Activated T-helper 2 cell treated with anti-CD3 and anti-CD28 coated beads, Interferon-gamma antibody, Interleukin-2, Interleukin-4, amounts not matched to agents 10 μg/mL and 5 μg/mL and 100 μg/mL, durations not matched to agents 14 hours and 24 hours and 36 hours (primary cell): ENCODE measurements at regions of chr19 and their contacts with region 1.

Region 1: DNA sequence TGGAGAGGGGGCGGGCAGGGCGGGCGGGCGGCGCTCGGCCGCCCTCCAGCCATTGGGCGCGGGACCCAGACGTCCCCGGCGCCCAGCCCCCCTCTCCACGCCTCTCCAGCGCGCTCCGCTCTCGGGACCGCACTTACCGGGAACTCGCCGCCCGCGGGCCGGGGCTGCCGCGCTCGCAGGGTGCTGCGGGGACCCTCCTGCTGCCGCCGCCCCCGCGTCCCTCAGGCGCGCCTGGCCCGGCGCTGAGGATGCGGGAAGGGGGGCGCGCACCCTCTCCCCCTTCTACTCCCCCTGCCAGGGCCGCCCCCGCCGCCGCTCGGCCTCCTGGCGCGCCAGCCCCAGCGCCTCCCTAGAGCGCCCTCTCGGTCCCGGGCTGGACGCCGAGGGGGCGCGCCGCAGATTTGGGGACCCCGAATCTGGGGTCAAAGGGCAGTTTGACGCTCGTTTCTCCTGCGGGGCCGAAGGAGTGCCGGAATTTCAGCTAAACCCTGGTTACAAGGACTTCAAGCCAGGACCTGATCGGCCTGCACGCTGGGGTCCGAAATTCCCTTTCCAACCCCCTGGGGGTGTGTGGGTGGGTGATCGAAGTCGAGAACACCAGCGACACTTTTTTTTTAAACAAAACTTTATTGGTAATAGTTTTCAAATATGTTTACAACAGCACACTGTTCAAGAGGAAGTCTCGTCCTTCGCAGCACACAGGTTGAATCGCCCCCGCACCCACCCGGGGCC is 696 bp upstream of the SAMD1 start:
- DNase-seq: peak; percentile 58
- H3K4me3 Mint-ChIP-seq: peak overlapping the region; percentile 99
- H3K27ac Mint-ChIP-seq: peak overlapping the region; percentile 99
- H3K4me1 Mint-ChIP-seq: peaks cover 11% of the 10 kb centered on the region
- H3K27me3 Mint-ChIP-seq: no peaks in the 10 kb centered on the region

Region 2: DNA sequence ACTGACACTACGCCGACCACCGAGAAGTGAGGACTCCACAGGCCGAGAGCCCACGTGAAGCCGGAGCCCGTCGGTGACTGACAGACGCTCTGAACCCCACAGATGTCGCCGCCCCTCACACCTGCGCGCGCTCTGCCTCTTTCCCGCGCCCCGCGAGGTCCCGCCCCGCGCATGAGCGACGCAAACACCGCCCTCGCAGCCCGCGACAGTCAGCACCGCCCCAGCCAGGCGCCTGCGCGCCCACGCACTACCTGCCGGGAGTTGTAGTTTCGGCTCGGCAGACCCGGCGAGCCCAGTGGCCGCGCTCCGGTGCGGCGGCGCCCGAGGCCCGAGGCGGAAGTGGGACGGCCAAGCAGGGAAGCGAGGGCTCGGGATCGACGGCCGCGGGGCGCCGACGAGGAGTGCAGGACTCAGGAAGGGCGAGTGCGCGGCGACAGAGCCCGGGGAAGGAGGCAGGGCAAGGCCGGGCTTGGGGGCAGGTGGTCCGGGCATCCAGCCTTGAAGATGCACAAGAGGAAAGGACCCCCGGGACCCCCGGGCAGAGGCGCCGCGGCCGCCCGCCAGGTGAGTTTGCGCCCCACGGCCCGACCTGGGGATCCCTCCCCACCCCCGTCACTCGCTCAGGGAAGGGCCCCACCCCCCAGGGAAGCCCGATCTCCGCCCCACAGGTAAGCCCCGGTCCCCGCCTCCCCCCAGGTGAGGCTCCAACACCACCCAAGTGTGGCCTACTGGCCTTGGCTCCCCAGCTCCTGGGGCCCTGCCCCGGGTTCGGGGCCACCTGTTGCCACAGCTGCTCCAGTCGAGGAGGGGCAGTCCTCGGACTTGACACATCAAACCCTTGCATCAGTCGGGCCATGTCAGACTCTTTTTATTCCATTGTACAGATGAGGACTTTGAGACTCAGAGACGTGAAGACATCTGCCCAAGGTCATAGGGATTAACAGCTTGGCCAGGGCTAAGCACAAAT is 185.0 kb before region 1 on chr19 and contains the starts of genes BRME1 and CC2D1A:
- intact Hi-C with region 1: no loop called
- DNase-seq: peak; percentile 93
- H3K4me3 Mint-ChIP-seq: peak within 1 kb of the TSS; percentile 82
- H3K27ac Mint-ChIP-seq: peak within 1 kb of the TSS; percentile 86
- H3K4me1 Mint-ChIP-seq: peaks cover 16% of the 10 kb centered on the region
- H3K27me3 Mint-ChIP-seq: no peaks in the 10 kb centered on the region
- total RNA-seq, gene BRME1: 14.9 and 15.3 TPM in 2 replicates
- total RNA-seq, gene CC2D1A: 36.9 and 41.5 TPM in 2 replicates

Region 3: GRCh38 chr19:14048443-14049153 is 42.6 kb before region 1 on chr19:
- intact Hi-C with region 1: no loop called
- DNase-seq: peak; percentile 53
- H3K4me3 Mint-ChIP-seq: no peak overlapping the region
- H3K27ac Mint-ChIP-seq: no peak overlapping the region
- H3K4me1 Mint-ChIP-seq: no peaks in the 10 kb centered on the region
- H3K27me3 Mint-ChIP-seq: no peaks in the 10 kb centered on the region

Region 4: GRCh38 chr19:14073261-14073924 is 17.9 kb before region 1 on chr19:
- intact Hi-C with region 1: loop called (anchors 2 kb)
- DNase-seq: peak; percentile 77
- H3K4me3 Mint-ChIP-seq: peak overlapping the region; percentile 97
- H3K27ac Mint-ChIP-seq: peak overlapping the region; percentile 93
- H3K4me1 Mint-ChIP-seq: peaks cover 8% of the 10 kb centered on the region
- H3K27me3 Mint-ChIP-seq: no peaks in the 10 kb centered on the region